Right lobe of liver (tissue), 6 donors: ENCODE measurements at regions of chr4 and their contacts with region 1.

Region 1: DNA sequence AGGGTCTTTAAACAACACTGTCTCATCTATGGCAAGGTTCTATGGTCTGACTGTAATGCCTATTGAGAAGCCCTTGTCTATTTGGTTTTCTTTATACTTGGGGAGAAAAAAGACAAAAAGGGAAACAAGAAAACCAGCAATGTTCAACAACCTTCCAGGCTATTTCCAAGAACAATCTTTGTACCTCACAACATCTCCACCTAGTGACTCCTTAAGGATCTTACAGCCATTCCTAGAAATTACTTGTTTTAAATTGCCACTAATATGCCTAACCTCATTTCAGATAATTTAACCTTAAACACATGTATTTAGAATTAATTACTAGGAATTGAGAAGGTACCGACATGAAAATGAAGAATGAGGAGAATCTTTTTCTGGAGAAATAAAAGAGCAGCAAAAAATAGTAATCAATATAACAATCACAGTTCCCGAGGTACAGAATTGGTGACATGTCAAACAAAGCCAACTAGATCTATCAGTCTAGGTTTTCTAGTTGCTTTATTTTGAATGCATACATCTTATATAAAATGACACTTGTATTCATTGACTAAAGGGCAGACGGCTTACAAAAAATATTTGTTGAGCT is 1.6 kb upstream of the RBM46 start:
- DNase-seq: no peak
- ATAC-seq: peak; percentile 72 to 79 (median 77)
- H3K4me3 ChIP-seq: no peak overlapping the region
- H3K27ac ChIP-seq: no peak overlapping the region
- H3K4me1 ChIP-seq: no peaks in the 10 kb centered on the region
- H3K27me3 ChIP-seq: no peaks in the 10 kb centered on the region
- CTCF ChIP-seq: peak; percentile 59 to 69 (median 64)
- POLR2A ChIP-seq: no peak

Region 2: DNA sequence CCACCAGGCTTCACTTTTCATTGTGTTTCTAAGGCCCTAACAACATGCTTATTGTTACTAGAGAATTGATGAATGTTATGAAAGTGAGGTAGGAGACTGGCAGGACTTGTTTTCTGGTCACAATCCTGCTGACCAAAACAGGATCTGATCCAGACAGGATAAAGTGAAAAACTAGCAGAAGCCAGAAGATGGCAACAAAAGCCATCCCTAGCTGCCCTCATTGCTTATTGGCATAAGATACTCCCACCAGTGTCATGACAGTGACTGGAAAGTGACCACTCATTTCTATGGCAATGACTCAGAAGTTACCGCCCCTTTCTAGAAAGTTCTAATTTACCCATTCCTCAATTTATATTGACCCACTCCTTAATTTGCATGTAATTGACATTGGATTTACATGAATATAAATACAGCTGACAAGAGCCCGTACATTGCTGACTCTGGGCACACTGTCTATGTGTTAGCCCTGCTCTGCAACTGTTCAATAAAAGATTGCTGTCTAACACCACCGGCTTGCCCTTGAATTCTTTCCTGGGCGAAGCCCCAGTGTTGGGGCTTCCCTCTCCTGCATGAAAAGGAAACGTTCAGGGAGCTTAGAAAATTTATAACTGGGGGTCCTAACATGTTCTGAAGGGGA is 137.0 kb before region 1 on chr4:
- intact Hi-C with region 1: loop called (anchors 10 kb)
- DNase-seq: no peak
- ATAC-seq: peak; percentile 36 to 83 (median 64)
- H3K4me3 ChIP-seq: no peak overlapping the region
- H3K27ac ChIP-seq: no peak overlapping the region
- H3K4me1 ChIP-seq: no peaks in the 10 kb centered on the region
- H3K27me3 ChIP-seq: no peaks in the 10 kb centered on the region
- CTCF ChIP-seq: peak; percentile 11 to 44 (median 28)
- POLR2A ChIP-seq: no peak